Activated CD8-positive, alpha-beta memory T cell treated with anti-CD3 and anti-CD28 coated beads, Interleukin-2, amount 10 ng/mL, durations not matched to agents 7 days and 5 days (primary cell): ENCODE measurements at regions of chr2 and their contacts with region 1.

Region 1: GRCh38 chr2:231800493-231801091 is 14.3 kb downstream of the COPS7B start:
- DNase-seq: peak; percentile 64
- ATAC-seq: peak; percentile 68
- H3K4me3 Mint-ChIP-seq: no peak overlapping the region
- H3K27ac Mint-ChIP-seq: no peak overlapping the region
- H3K4me1 Mint-ChIP-seq: no peaks in the 10 kb centered on the region
- H3K27me3 Mint-ChIP-seq: no peaks in the 10 kb centered on the region

Region 2: GRCh38 chr2:231786177-231786916 is 14.2 kb before region 1 on chr2 and contains the start of gene COPS7B:
- CTCF ChIA-PET with region 1: interaction called, 12 read pairs
- DNase-seq: peak; percentile 88
- ATAC-seq: peak; percentile 77
- H3K4me3 Mint-ChIP-seq: peak within 1 kb of the TSS; percentile 92
- H3K27ac Mint-ChIP-seq: peak within 1 kb of the TSS; percentile 83
- H3K4me1 Mint-ChIP-seq: peaks cover 56% of the 10 kb centered on the region
- H3K27me3 Mint-ChIP-seq: no peaks in the 10 kb centered on the region
- total RNA-seq, gene COPS7B: 47.3 to 54.4 TPM

Region 3: DNA sequence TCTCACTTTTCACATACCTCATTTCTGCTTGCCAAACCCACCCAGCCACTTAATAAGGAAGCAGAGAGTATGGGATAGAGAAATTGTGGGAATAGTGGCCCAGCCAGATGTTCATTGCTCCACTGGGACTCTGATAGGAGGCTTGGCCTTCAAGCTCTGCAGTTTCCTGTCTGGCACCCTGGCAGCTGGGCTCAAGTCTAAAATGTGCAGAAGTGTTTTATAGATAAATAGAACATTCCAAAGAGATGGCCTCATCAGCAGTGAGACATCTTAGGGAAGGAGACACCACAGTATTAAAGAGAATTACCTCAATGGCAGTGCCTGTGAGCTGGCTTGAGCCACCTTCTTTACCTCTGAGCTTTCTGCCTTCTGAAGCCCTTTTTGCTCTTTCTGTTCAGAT is 10.3 kb after region 1 on chr2:
- CTCF ChIA-PET with region 1: interaction called, 17 read pairs
- DNase-seq: no peak
- ATAC-seq: no peak
- H3K4me3 Mint-ChIP-seq: no peak overlapping the region
- H3K27ac Mint-ChIP-seq: no peak overlapping the region
- H3K4me1 Mint-ChIP-seq: no peaks in the 10 kb centered on the region
- H3K27me3 Mint-ChIP-seq: no peaks in the 10 kb centered on the region